AG04449 (cell line): ENCODE measurements at regions of chr16 and their contacts with region 1.

Region 1: GRCh38 chr16:10181196-10182162 is 749 bp downstream of the GRIN2A start:
- DNase-seq: no peak
- H3K4me3 ChIP-seq: peak overlapping the region; percentile 27
- CTCF ChIP-seq: peak; percentile 97

Region 2: DNA sequence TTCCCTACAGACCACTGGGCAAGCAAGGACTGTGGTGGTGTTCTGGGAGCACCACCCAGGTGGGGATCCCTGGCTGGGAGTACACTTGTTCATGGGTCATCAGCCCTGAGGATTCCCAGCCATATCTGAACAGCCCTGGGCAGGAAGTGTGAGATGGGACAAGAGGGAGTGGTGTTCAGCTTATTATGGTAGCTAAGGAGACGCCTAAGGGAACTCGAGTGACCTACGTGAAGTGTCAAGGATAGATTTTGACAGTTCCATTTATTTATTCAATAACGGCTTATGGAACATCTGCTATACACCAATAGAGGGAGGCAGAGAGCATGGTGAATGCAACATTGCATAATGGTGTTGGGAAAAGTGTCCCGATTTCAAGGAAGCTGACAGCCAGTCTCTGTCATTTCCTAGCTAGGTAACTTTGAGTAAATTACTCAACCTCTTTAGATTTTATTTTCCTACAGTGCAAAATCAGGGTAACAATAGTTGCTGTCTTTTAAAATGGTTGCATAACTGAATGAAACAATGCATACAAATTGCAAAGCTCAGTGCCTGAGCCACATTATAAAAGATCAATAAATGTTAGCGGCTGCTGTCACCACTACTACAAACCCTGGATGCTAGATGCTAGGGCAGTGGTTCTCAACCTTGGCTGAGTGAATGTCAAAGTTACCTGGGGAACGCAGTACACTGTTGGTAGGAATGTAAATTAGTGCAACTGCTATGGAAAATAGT is 533.3 kb before region 1 on chr16:
- CTCF ChIA-PET with region 1: interaction called, 33 read pairs
- POLR2A ChIA-PET with region 1: no interaction called
- DNase-seq: no peak
- H3K4me3 ChIP-seq: no peak overlapping the region
- CTCF ChIP-seq: peak; percentile 57